Tibial artery (tissue), 4 donors: ENCODE measurements at regions of chr11 and their contacts with region 1.

Region 1: DNA sequence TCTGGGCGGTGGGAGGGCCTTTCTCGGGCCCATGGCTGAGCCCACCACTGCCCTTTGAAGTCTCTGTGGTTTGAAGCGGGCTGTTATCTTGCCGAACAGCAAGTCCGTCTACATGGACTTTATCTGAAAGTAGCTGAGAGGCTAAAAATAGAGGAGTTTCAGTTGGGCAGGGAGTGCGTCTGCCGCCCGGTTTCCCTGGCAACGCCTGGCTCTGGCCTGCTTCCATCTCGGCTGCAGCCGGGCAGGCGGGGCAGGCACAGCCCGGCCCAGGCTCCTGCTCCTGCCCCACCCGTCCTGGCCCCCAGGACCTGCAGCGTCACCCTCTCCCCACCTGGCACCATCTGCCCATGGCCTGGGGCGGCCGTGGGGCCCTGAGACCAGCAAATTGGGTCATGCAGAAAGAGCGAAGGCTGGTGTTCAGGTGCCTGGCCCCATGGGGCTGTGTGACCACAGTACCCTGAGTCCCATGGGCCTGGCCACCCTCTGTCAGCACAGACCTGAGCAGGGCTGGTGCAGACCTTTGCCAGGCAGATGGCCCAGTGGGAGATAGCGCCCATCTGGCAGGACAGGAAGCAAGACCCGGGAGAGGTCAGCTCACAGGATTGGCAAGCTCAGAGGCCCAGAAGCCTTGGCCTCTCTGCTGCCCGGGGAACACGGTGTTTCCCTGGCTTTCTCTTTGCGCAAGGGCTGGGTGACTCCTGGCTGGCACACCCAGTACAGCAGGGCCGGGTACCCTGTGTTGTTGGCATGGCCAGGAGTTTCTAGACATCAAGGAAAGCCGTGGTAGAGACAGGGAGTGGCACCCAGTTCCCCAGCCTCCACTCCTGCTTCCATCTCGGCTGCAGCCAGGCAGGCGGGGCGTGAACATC is 79.1 kb upstream of the KCNQ1OT1 start:
- DNase-seq: peak; percentile 75 to 94
- H3K4me3 ChIP-seq: peak overlapping the region; percentile 35 to 43
- H3K27ac ChIP-seq: peak overlapping the region; percentile 74 to 86
- H3K4me1 ChIP-seq: peaks cover 0 to 42% (median 36%) of the 10 kb centered on the region in 4 donors
- H3K27me3 ChIP-seq: no peaks in the 10 kb centered on the region
- CTCF ChIP-seq: peak; percentile 50

Region 2: DNA sequence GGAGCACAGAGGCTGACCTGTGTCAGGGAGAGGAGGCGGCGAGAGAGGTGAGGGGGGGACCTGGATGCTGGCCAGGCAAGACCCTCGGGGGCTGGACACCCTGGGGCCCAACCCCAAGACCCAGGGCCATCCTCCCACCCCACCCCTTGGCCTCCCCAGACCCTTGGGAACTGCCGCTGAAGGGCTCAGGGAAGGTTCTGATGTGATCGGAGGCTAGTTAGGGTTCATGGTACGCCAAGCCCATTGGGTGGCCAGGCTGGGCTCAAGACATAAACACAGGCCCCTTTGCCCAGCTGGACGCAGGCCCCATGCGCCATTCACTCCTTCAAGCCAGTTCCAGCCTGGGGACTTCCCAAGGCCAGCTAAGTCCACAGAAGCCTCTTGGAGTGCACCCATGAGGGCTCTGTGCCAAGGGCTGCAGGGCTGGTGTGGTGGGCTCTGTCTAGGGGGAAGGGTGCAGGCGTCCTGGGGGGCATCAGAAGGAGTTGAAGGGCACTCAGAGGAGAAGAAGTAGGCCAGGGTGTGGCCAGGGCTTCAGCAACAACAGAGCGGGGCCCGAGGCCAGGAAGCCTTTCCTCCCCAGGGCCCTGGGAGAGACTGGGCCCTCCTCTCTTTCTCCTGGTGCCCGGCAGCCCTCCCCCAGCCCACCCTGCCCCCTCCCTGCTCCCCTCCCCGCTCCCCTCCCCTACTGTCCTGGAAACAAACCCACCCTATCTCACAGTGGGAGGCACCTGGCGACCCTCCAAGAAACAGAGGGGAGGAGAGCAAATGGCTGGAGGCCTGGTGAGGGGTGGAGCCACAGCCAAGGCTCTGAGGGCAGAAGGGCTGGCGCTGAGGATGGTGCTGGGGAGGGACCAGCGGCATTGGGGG is 464.1 kb before region 1 on chr11:
- intact Hi-C with region 1: loop called (anchors 10 kb)
- DNase-seq: peak; percentile 85 to 94
- H3K4me3 ChIP-seq: peak overlapping the region; percentile 26 to 37
- H3K27ac ChIP-seq: peak overlapping the region; percentile 77 to 86
- H3K4me1 ChIP-seq: peaks cover 0 to 34% (median 25%) of the 10 kb centered on the region in 4 donors
- H3K27me3 ChIP-seq: no peaks in the 10 kb centered on the region
- CTCF ChIP-seq: no peak

Region 3: DNA sequence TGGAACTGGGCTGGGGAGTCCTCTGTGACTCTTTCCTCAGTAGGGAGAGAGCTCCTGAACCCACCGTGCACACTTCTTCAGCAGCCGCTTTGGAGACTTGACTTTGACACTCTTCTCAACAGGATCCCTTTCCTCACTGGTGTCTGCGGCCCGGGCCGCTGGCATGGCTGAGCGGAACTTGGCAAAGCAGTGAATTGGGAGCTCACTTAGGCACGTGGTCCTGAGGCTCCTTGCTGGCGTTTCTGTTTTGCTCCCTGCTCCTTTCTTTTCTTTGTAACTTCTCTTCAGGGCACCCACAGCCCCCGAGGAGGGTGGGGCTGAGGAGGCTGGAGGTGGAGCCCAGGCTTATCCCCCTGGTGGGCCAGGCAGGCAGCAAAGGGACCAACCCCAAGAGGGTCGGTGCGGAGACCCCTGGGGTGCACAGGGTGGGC is 70.7 kb before region 1 on chr11:
- intact Hi-C with region 1: loop called (anchors 5 kb)
- DNase-seq: peak; percentile 47 to 83
- H3K4me3 ChIP-seq: peak overlapping the region; percentile 3 to 27
- H3K27ac ChIP-seq: peak overlapping the region in 1 of 2 donors; percentile 50
- H3K4me1 ChIP-seq: peaks cover 0 to 23% (median 17%) of the 10 kb centered on the region in 4 donors
- H3K27me3 ChIP-seq: no peaks in the 10 kb centered on the region
- CTCF ChIP-seq: no peak

Region 4: DNA sequence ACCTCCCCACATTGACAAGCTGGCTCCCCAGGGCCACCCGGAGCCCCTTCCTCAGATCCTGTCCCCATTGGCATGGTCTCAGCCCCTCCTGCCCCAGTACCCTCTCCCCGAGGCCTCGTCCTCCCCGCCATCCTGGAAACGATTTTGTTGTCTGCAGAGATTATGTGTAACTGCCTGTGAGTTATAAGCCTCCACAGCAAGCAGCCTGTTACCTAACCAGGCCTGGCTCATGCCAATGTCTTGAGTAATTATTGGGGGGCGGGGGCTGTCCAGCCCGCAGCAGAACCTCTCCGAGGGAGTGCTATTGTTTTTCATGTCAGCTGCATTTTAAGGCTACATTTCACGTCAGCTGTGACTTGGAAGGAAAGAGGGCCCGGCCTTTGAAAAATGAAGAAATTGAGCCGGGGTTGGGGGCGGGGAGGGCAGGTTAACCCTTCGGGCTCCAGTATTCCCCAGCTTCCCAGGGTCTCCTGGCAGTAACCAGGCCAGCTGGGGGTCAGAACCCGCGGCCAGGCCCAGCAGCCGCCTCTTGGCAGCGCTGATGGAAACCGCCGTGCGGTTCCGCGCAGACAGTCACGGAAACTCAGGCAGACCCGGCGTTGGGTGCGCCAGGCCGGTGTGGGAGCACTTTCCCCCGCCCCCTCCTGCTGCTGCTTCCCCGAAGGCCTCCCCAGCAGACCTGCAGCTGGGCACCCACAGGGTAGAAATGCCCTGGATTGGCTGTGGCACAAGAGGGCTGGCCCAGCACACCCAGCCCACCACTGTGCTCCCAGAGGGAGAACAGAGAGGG is 47.2 kb after region 1 on chr11:
- intact Hi-C with region 1: no loop called
- DNase-seq: peak; percentile 88 to 93
- H3K4me3 ChIP-seq: peak overlapping the region; percentile 16 to 37
- H3K27ac ChIP-seq: peak overlapping the region; percentile 83 to 89
- H3K4me1 ChIP-seq: peaks cover 4 to 40% (median 26%) of the 10 kb centered on the region in 4 donors
- H3K27me3 ChIP-seq: no peaks in the 10 kb centered on the region
- CTCF ChIP-seq: no peak

Region 5: GRCh38 chr11:2850371-2850770 is 71.5 kb after region 1 on chr11:
- intact Hi-C with region 1: no loop called
- DNase-seq: no peak
- H3K4me3 ChIP-seq: no peak overlapping the region
- H3K27ac ChIP-seq: no peak overlapping the region
- H3K4me1 ChIP-seq: no peaks in the 10 kb centered on the region
- H3K27me3 ChIP-seq: peaks cover 0 to 10% of the 10 kb centered on the region in 2 donors
- CTCF ChIP-seq: no peak

Region 6: GRCh38 chr11:2885676-2886081 is 106.8 kb after region 1 on chr11 and contains the start of gene CDKN1C:
- intact Hi-C with region 1: loop called (anchors 5 kb)
- DNase-seq: peak; percentile 91 to 96
- H3K4me3 ChIP-seq: peak within 1 kb of the TSS; percentile 87 to 89
- H3K27ac ChIP-seq: peak within 1 kb of the TSS; percentile 82 to 84
- H3K4me1 ChIP-seq: peaks cover 0 to 40% (median 14%) of the 10 kb centered on the region in 4 donors
- H3K27me3 ChIP-seq: peaks cover 0 to 5% of the 10 kb centered on the region in 2 donors
- CTCF ChIP-seq: peak in 1 of 2 experiments; percentile 11